ENCODE measurements at regions of chr22 and their contacts with region 1.

Region 1: DNA sequence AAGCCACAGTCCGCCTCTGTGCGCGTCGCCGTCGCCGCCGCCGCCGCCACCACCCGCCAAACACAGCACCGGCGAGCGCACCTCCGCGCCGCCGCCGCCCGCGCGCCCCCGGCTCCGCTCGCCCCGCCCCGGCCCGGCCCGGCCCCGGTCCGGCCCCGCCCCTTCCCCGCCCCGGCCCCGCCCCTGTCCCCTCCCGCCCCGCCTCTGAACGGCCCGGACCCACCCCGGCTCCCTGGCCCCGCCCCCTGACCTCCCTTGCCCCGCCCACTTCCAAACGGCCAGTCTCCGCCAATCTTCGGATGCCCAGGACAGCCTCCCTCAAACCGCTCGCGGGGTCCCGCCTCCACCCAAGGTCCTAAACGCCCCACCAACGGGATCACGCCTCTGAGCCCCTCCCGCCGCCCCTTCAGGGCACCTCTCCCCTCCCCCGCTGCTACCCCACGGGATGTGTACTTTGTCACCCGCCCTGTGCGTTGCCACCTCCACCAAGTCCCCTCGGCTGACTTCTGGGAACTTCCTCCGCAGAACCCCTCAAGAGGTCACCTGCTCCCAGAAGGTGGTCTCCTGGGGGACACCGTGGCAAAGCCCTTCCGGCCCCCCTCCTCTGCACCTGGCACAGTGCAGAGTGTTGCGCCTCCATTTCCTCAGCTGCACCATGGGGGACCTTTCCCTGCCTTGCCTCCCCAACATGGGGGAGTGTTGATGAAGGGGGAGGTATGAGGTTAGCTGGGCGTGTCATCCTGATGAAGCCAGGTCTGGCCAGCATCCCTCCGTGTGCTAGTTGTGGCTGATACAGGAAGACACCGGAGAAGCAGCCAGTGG is at the start of gene KIAA0930:
- DNase-seq: peak; percentile 47 to 70 (median 59)
- H3K4me3 ChIP-seq: peak within 1 kb of the TSS; percentile 75 to 90 (median 77)
- H3K4me3 Mint-ChIP-seq: peak within 1 kb of the TSS; percentile 98
- H3K27ac ChIP-seq: peak within 1 kb of the TSS; percentile 69 to 71
- H3K27ac Mint-ChIP-seq: peak within 1 kb of the TSS; percentile 88 to 95 (median 94)
- H3K4me1 ChIP-seq: peaks cover 57 to 70% of the 10 kb centered on the region in 2 donors
- H3K4me1 Mint-ChIP-seq: peaks cover 73% of the 10 kb centered on the region
- H3K27me3 ChIP-seq: no peaks in the 10 kb centered on the region
- H3K27me3 Mint-ChIP-seq: peaks cover 0 to 6% (median 3%) of the 10 kb centered on the region in 3 donors
- CTCF ChIP-seq: no peak
- polyA plus RNA-seq, gene KIAA0930: 14.0 to 89.1 (median 15.6) TPM

Region 2: GRCh38 chr22:44889258-44889878 is 351.7 kb before region 1 on chr22:
- intact Hi-C with region 1: no loop called
- DNase-seq: no peak
- H3K4me3 ChIP-seq: no peak overlapping the region
- H3K4me3 Mint-ChIP-seq: no peak overlapping the region
- H3K27ac ChIP-seq: no peak overlapping the region
- H3K27ac Mint-ChIP-seq: no peak overlapping the region
- H3K4me1 ChIP-seq: no peaks in the 10 kb centered on the region
- H3K4me1 Mint-ChIP-seq: no peaks in the 10 kb centered on the region
- H3K27me3 ChIP-seq: no peaks in the 10 kb centered on the region
- H3K27me3 Mint-ChIP-seq: no peaks in the 10 kb centered on the region
- CTCF ChIP-seq: no peak

Region 3: DNA sequence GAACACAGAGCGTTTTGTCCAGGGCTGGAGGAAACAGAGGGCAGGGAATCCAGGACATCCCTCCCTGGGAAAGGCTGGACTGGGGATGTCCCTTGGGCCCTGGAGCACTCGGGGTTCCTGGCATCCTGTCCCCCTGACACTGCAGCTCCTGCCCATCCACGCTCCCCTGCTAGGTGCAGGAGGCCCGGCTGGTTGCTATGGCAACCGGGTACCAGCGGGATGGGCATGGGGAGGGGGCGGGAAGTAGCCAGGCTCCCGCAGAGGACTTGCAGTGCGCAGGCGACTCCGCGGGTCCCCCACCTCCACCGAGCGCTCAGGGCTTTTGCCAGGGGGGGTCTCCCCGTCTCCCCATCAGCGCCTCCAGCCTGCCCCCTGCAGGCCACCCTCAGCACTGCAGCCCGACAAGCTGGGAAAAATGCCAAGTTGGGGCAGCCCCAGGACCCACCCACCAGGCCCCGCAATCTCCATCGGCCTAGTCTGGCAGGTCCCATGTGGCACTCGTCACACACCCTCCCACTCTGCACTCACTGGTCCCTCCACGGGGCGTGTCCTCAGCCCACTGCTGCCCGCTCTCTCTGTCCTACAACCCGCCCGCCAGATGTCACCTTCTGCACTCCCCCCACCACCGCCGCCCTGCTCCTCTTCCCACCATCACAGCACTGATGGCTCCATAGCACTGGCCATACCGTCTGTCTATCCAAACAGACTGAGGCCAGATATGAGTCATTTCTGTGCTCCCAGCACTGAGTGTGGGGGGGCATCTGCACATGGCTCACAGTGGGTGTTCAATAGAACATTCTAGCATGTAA is 31.8 kb before region 1 on chr22:
- intact Hi-C with region 1: loop called in 1 of 2 experiments (anchors 5 kb)
- DNase-seq: peak in 1 of 3 donors; percentile 30
- H3K4me3 ChIP-seq: no peak overlapping the region
- H3K4me3 Mint-ChIP-seq: no peak overlapping the region
- H3K27ac ChIP-seq: peak overlapping the region in 1 of 2 donors; percentile 98
- H3K27ac Mint-ChIP-seq: peak overlapping the region; percentile 14 to 90 (median 79)
- H3K4me1 ChIP-seq: peaks cover 26 to 27% of the 10 kb centered on the region in 2 donors
- H3K4me1 Mint-ChIP-seq: peaks cover 29% of the 10 kb centered on the region
- H3K27me3 ChIP-seq: no peaks in the 10 kb centered on the region
- H3K27me3 Mint-ChIP-seq: peaks cover 0 to 2% (median 1%) of the 10 kb centered on the region in 3 donors
- CTCF ChIP-seq: peak; percentile 79

Region 4: GRCh38 chr22:45284705-45285262 is 43.8 kb after region 1 on chr22 and contains the start of gene UPK3A:
- intact Hi-C with region 1: no loop called
- DNase-seq: peak; percentile 57 to 81 (median 75)
- H3K4me3 ChIP-seq: peak within 1 kb of the TSS; percentile 29 to 76 (median 44)
- H3K4me3 Mint-ChIP-seq: peak within 1 kb of the TSS; percentile 69 to 88
- H3K27ac ChIP-seq: peak within 1 kb of the TSS; percentile 41 to 69
- H3K27ac Mint-ChIP-seq: peak within 1 kb of the TSS; percentile 62 to 93 (median 85)
- H3K4me1 ChIP-seq: peaks cover 70 to 80% of the 10 kb centered on the region in 2 donors
- H3K4me1 Mint-ChIP-seq: peaks cover 51% of the 10 kb centered on the region
- H3K27me3 ChIP-seq: no peaks in the 10 kb centered on the region
- H3K27me3 Mint-ChIP-seq: peaks cover 2 to 7% (median 4%) of the 10 kb centered on the region in 3 donors
- CTCF ChIP-seq: no peak
- polyA plus RNA-seq, gene UPK3A: 6.0 to 19.0 (median 14.0) TPM

Region 5: GRCh38 chr22:45319324-45319685 is 78.3 kb after region 1 on chr22:
- intact Hi-C with region 1: no loop called
- DNase-seq: no peak
- H3K4me3 ChIP-seq: no peak overlapping the region
- H3K4me3 Mint-ChIP-seq: no peak overlapping the region
- H3K27ac ChIP-seq: peak overlapping the region; percentile 41 to 80
- H3K27ac Mint-ChIP-seq: peak overlapping the region; percentile 92 to 97 (median 94)
- H3K4me1 ChIP-seq: peaks cover 38 to 39% of the 10 kb centered on the region in 2 donors
- H3K4me1 Mint-ChIP-seq: peaks cover 45% of the 10 kb centered on the region
- H3K27me3 ChIP-seq: no peaks in the 10 kb centered on the region
- H3K27me3 Mint-ChIP-seq: peaks cover 0 to under 1% (median 0%) of the 10 kb centered on the region in 3 donors
- CTCF ChIP-seq: no peak